ENCODE measurements at regions of chr5 and their contacts with region 1.

Region 1: GRCh38 chr5:80487829-80488721 is at the start of gene FAM151B:
- DNase-seq: peak; percentile 96 to 97
- H3K4me3 ChIP-seq: peak within 1 kb of the TSS; percentile 42 to 67 (median 57)
- H3K27ac ChIP-seq: peak within 1 kb of the TSS; percentile 63 to 89 (median 78)
- H3K4me1 ChIP-seq: peaks cover 0 to 12% of the 10 kb centered on the region in 2 donors
- H3K27me3 ChIP-seq: no peaks in the 10 kb centered on the region
- CTCF ChIP-seq: peak in 4 of 6 experiments; percentile 23 to 33 (median 32)
- POLR2A ChIP-seq: peak; percentile 25 to 78
- total RNA-seq, gene FAM151B: 2.6 to 8.1 (median 4.5) TPM

Region 2: DNA sequence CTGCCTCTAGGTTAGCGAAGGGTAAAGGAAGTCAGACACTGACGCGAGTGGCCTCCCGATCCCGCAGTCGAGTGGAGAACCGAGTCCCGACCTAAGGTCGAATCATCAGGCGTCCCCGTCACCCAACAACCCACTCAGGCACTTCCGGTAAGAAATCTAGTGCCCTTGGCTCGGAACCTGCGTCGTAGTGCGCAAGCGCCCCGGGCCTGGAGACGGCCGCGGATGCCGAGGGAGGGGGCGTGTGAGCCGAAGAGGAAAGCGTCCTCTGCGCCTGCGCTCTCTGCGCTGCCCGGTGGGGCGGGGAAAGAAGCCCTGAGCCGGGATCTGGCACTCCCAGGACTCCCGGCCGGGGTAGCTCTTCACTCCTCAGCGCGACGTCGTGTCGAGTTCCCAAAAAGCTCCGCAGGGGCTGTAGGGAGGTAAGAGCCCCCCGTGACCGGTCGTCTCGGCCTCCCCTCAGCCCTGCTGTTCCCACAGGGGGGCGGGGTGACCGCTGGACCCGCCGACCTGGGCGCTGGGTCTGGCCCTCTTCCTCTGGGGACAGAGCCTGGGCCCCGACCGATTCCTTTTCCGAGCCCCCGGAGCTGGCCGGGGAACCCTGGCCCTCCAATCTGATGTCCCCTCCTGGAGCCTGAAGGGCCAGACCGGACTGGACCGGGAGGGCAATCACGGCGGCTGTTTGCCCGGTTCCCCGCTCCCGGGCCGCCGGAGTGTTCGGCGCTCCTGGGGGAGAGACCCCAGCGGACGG is 80.2 kb before region 1 on chr5 and contains the start of gene ZFYVE16:
- intact Hi-C with region 1: loop called (anchors 5 kb)
- DNase-seq: peak; percentile 98 to 99
- H3K4me3 ChIP-seq: peak within 1 kb of the TSS; percentile 45 to 91 (median 51)
- H3K27ac ChIP-seq: peak within 1 kb of the TSS; percentile 97 to 98 (median 98)
- H3K4me1 ChIP-seq: peaks cover 16 to 26% of the 10 kb centered on the region in 2 donors
- H3K27me3 ChIP-seq: no peaks in the 10 kb centered on the region
- CTCF ChIP-seq: peak in 3 of 6 experiments; percentile 40 to 45 (median 42)
- POLR2A ChIP-seq: peak; percentile 79 to 94
- total RNA-seq, gene ZFYVE16: 31.8 to 64.7 (median 45.2) TPM

Region 3: DNA sequence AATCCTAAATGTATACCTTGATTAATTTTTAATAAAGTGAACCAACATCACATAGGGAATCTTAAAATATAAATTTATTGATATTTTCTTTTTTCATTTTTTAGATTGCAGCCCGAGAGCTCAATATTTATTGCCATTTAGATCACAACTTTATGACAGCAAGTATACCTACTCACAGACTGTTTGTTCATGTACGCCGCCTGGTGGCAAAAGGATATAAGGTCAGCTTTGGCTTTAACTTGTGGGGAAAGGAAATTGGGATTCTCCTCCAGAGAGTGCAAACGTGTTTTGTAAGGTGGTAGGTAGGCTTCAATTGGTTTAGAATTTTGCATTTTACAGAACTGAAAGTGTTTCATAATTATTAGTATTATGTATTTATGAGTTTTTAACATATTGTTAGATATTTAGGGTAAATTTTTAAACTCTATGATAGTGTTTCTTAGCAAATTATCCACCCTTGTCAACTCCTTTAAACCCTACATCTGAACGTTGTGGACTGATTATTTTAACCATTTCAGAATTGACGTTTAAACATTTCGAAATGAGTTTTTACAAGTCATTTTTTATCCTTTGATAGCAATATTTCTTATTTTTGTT is 184.2 kb after region 1 on chr5:
- intact Hi-C with region 1: loop called (anchors 5 kb)
- DNase-seq: peak; percentile 73 to 85
- H3K4me3 ChIP-seq: no peak overlapping the region
- H3K27ac ChIP-seq: no peak overlapping the region
- H3K4me1 ChIP-seq: peaks cover 0 to 8% of the 10 kb centered on the region in 2 donors
- H3K27me3 ChIP-seq: no peaks in the 10 kb centered on the region
- CTCF ChIP-seq: peak; percentile 51 to 83 (median 74)
- POLR2A ChIP-seq: no peak

Region 4: GRCh38 chr5:81151546-81151945 is 663.5 kb after region 1 on chr5:
- intact Hi-C with region 1: no loop called
- DNase-seq: no peak
- H3K4me3 ChIP-seq: no peak overlapping the region
- H3K27ac ChIP-seq: no peak overlapping the region
- H3K4me1 ChIP-seq: no peaks in the 10 kb centered on the region
- H3K27me3 ChIP-seq: no peaks in the 10 kb centered on the region
- CTCF ChIP-seq: no peak
- POLR2A ChIP-seq: no peak

Measured in thyroid gland (tissue), 4 donors.